Activated CD4-positive, alpha-beta memory T cell treated with anti-CD3 and anti-CD28 coated beads for 36 hours (primary cell): ENCODE measurements at regions of chr19 and their contacts with region 1.

Region 1: DNA sequence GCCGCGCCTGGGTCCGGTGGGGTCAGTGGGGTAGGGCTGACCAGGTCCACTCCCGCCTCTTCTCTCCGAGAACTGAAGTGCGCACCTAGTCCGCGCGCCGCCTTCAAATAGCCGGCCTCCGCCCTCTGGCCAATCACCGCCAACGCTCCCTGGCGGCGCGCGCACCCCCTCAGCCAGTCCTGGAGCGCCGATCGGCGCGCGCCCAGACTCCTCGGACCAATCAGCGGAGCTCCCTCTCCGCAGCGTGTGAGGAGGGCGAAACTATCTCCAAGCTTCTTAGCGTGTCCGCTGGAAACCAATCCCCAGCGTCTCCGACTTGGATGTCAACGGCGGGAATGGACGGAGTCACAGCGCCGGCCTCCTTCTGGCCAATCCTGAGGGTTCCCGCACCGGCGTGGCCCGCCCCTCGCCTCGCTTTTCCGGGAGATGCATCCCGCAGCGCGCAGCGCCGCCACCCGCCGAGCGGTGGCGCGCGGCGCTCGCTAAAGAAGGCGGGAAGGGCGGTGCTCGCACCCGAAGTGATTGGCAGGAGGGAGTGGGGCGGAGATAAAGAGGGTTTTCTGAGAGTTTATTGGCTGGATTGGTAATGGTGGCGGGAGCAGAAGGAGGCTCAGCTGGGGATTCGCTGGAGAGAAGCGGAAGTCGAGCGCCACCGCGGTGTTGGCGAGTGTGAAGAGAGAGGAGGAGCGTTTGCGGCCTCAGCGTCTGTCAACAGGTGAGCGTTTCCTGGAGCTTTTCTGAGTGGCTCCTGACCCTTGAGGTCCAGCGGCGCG is at the start of gene ASF1B:
- DNase-seq: peak; percentile 99
- H3K4me3 Mint-ChIP-seq: peak within 1 kb of the TSS; percentile 81
- H3K27ac Mint-ChIP-seq: peak within 1 kb of the TSS; percentile 94
- H3K4me1 Mint-ChIP-seq: peaks cover 33% of the 10 kb centered on the region
- H3K27me3 Mint-ChIP-seq: no peaks in the 10 kb centered on the region
- total RNA-seq, gene ASF1B: 67.7 to 70.8 TPM

Region 2: GRCh38 chr19:14073261-14073924 is 63.3 kb before region 1 on chr19:
- CTCF ChIA-PET with region 1: interaction called, 16 read pairs
- POLR2A ChIA-PET with region 1: interaction called, 3 read pairs
- intact Hi-C with region 1: no loop called
- DNase-seq: peak; percentile 80
- H3K4me3 Mint-ChIP-seq: peak overlapping the region; percentile 95
- H3K27ac Mint-ChIP-seq: peak overlapping the region; percentile 84
- H3K4me1 Mint-ChIP-seq: peaks cover 13% of the 10 kb centered on the region
- H3K27me3 Mint-ChIP-seq: no peaks in the 10 kb centered on the region

Region 3: GRCh38 chr19:14117668-14118164 is 19.0 kb before region 1 on chr19 and contains the start of gene PRKACA:
- CTCF ChIA-PET with region 1: interaction called, 37 read pairs
- POLR2A ChIA-PET with region 1: interaction called, 4 read pairs
- intact Hi-C with region 1: loop called (anchors 1 kb)
- DNase-seq: peak; percentile 99
- H3K4me3 Mint-ChIP-seq: peak within 1 kb of the TSS; percentile 81
- H3K27ac Mint-ChIP-seq: peak within 1 kb of the TSS; percentile 76
- H3K4me1 Mint-ChIP-seq: peaks cover 37% of the 10 kb centered on the region
- H3K27me3 Mint-ChIP-seq: no peaks in the 10 kb centered on the region
- total RNA-seq, gene PRKACA: 64.3 to 65.6 TPM

Region 4: GRCh38 chr19:14248578-14249011 is 111.9 kb after region 1 on chr19:
- CTCF ChIA-PET with region 1: no interaction called
- POLR2A ChIA-PET with region 1: no interaction called
- intact Hi-C with region 1: no loop called
- DNase-seq: peak; percentile 57
- H3K4me3 Mint-ChIP-seq: peak overlapping the region; percentile 50
- H3K27ac Mint-ChIP-seq: peak overlapping the region; percentile 66
- H3K4me1 Mint-ChIP-seq: peaks cover 4% of the 10 kb centered on the region
- H3K27me3 Mint-ChIP-seq: no peaks in the 10 kb centered on the region

Region 5: GRCh38 chr19:14347999-14348889 is 211.5 kb after region 1 on chr19:
- CTCF ChIA-PET with region 1: interaction called, 28 read pairs
- POLR2A ChIA-PET with region 1: interaction called, 3 read pairs
- intact Hi-C with region 1: loop called (anchors 5 kb)
- DNase-seq: peak; percentile 79
- H3K4me3 Mint-ChIP-seq: peak overlapping the region; percentile 55
- H3K27ac Mint-ChIP-seq: peak overlapping the region; percentile 45
- H3K4me1 Mint-ChIP-seq: peaks cover 22% of the 10 kb centered on the region
- H3K27me3 Mint-ChIP-seq: no peaks in the 10 kb centered on the region

Region 6: GRCh38 chr19:14383661-14384555 is 247.2 kb after region 1 on chr19:
- CTCF ChIA-PET with region 1: interaction called, 15 read pairs
- POLR2A ChIA-PET with region 1: interaction called, 5 read pairs
- intact Hi-C with region 1: no loop called
- DNase-seq: peak; percentile 81
- H3K4me3 Mint-ChIP-seq: peak overlapping the region; percentile 84
- H3K27ac Mint-ChIP-seq: peak overlapping the region; percentile 95
- H3K4me1 Mint-ChIP-seq: peaks cover 30% of the 10 kb centered on the region
- H3K27me3 Mint-ChIP-seq: no peaks in the 10 kb centered on the region

Region 7: DNA sequence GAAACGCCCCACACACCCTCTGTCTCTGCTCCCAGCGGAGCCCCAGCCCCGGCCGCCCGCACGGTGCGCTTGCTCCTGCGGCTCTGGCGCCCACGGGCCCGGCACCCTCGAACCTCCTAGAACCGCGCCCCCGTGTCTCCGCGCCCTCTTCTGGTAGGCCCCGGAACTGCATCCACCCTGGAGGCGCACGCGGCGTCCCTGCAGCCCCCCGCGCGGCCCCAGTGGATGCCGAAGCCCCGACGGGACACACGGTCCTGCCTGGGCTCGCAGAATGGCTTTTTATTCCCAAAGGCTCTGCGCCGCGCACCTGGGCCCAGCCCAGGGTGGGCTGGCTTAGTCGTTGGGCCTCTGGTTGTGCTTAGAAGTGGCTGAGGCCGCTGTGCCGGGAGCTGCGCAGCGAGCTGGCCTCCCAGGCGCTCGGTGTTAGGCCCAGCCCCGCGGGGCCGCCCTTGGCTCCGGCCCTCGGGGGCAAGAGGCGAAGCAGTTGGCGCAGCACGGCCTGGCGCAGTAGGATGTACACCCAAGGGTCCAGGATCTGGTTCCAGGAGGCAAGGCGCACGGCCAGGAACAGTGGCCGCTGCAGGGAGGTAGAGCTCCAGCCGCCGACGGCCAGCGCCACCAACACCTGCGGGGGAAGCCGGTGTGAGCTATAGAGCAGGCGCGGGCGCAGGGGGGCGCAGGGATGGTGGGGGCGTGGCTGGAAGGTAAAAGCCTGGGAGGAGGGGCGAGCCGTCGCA is 335.7 kb after region 1 on chr19:
- CTCF ChIA-PET with region 1: interaction called, 11 read pairs
- POLR2A ChIA-PET with region 1: no interaction called
- intact Hi-C with region 1: loop called (anchors 5 kb)
- DNase-seq: peak; percentile 86
- H3K4me3 Mint-ChIP-seq: no peak overlapping the region
- H3K27ac Mint-ChIP-seq: no peak overlapping the region
- H3K4me1 Mint-ChIP-seq: peaks cover 28% of the 10 kb centered on the region
- H3K27me3 Mint-ChIP-seq: peaks cover 18% of the 10 kb centered on the region